WTC11 (cell line): ENCODE measurements at regions of chr19 and their contacts with region 1.

Region 1: GRCh38 chr19:3035542-3036118 is 6.5 kb upstream of the TLE2 start:
- DNase-seq: peak; percentile 98
- ATAC-seq: peak; percentile 87
- H3K4me3 Mint-ChIP-seq: peak overlapping the region; percentile 86
- H3K27ac Mint-ChIP-seq: peak overlapping the region; percentile 93
- H3K4me1 Mint-ChIP-seq: peaks cover 27% of the 10 kb centered on the region
- H3K27me3 Mint-ChIP-seq: peaks cover 66% of the 10 kb centered on the region
- CTCF ChIP-seq: no peak

Region 2: DNA sequence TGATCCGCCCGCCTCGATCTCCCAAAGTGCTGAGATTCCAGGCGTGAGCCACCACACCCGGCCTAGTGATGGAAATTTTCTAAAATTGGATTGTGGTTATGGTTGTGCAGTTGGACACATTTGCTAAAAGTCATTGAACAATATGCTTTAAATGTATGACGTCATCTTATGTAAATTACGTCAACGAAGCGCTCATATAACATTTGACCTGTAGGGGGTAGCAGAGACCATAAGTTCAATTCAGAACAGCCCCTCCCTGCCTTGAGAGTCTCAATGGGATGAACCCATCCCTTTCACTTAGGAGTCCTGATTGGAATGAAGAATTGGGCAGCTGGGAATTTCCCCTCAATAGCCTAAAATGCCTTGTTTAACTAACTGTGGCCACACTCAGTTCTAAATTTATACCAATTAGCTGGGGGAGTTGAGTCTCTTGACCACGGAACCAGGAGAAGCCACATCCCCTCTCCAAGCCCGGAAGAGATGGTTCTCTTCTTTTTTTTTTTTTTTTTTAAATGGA is 73.5 kb before region 1 on chr19:
- CTCF ChIA-PET with region 1: interaction called, 17 read pairs
- POLR2A ChIA-PET with region 1: interaction called, 4 read pairs
- DNase-seq: peak; percentile 52
- ATAC-seq: peak; percentile 84
- H3K4me3 Mint-ChIP-seq: no peak overlapping the region
- H3K27ac Mint-ChIP-seq: peak overlapping the region; percentile 92
- H3K4me1 Mint-ChIP-seq: peaks cover 2% of the 10 kb centered on the region; the same call in 1 of the 2 replicates
- H3K27me3 Mint-ChIP-seq: no peaks in the 10 kb centered on the region; the same call in 1 of the 2 replicates
- CTCF ChIP-seq: peak; percentile 83

Region 3: GRCh38 chr19:2977001-2977685 is 58.5 kb before region 1 on chr19 and contains the start of gene TLE6:
- CTCF ChIA-PET with region 1: interaction called, 25 read pairs
- POLR2A ChIA-PET with region 1: interaction called, 8 read pairs
- DNase-seq: peak; percentile 99
- ATAC-seq: peak; percentile 86
- H3K4me3 Mint-ChIP-seq: peak within 1 kb of the TSS; percentile 71
- H3K27ac Mint-ChIP-seq: no peak within 1 kb of the TSS
- H3K4me1 Mint-ChIP-seq: peaks cover 27% of the 10 kb centered on the region
- H3K27me3 Mint-ChIP-seq: peaks cover 58% of the 10 kb centered on the region
- CTCF ChIP-seq: no peak
- total RNA-seq, gene TLE6: 2.5 to 3.3 TPM (median 3.1 TPM) in 3 replicates

Region 4: GRCh38 chr19:3047425-3048189 is 12.0 kb after region 1 on chr19:
- CTCF ChIA-PET with region 1: interaction called, 32 read pairs
- POLR2A ChIA-PET with region 1: interaction called, 17 read pairs
- DNase-seq: peak; percentile 82
- ATAC-seq: peak; percentile 75
- H3K4me3 Mint-ChIP-seq: peak overlapping the region; percentile 82
- H3K27ac Mint-ChIP-seq: peak overlapping the region; percentile 93
- H3K4me1 Mint-ChIP-seq: peaks cover 26% of the 10 kb centered on the region
- H3K27me3 Mint-ChIP-seq: peaks cover 35% of the 10 kb centered on the region
- CTCF ChIP-seq: no peak

Region 5: DNA sequence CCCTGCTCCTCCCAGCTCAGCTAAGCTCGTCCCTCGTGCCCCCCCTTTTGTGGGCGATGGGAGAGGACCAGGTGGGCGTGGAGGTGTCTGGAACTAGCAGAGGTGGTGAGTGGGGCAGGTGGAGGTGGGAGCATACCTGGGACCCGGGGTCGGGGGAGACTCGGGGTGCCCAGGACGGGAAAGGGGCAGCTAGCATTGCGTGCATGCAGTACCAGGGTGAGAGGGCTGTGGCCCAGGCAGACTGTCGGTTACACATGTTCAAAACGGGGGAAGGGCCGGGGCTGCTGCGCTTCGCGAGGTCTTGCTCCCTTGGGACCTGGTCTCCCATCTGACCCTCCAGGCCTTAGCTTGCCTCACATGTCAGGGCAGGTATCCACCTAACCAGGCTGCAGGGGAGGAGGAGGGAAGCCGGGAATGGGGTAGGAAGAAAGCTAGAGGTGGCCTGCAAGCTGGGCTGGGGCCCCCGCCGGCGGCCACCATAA is 17.6 kb after region 1 on chr19:
- CTCF ChIA-PET with region 1: interaction called, 10 read pairs
- POLR2A ChIA-PET with region 1: interaction called, 4 read pairs
- DNase-seq: no peak
- ATAC-seq: no peak
- H3K4me3 Mint-ChIP-seq: no peak overlapping the region
- H3K27ac Mint-ChIP-seq: no peak overlapping the region
- H3K4me1 Mint-ChIP-seq: peaks cover 39% of the 10 kb centered on the region
- H3K27me3 Mint-ChIP-seq: peaks cover 4% of the 10 kb centered on the region
- CTCF ChIP-seq: no peak

Region 6: DNA sequence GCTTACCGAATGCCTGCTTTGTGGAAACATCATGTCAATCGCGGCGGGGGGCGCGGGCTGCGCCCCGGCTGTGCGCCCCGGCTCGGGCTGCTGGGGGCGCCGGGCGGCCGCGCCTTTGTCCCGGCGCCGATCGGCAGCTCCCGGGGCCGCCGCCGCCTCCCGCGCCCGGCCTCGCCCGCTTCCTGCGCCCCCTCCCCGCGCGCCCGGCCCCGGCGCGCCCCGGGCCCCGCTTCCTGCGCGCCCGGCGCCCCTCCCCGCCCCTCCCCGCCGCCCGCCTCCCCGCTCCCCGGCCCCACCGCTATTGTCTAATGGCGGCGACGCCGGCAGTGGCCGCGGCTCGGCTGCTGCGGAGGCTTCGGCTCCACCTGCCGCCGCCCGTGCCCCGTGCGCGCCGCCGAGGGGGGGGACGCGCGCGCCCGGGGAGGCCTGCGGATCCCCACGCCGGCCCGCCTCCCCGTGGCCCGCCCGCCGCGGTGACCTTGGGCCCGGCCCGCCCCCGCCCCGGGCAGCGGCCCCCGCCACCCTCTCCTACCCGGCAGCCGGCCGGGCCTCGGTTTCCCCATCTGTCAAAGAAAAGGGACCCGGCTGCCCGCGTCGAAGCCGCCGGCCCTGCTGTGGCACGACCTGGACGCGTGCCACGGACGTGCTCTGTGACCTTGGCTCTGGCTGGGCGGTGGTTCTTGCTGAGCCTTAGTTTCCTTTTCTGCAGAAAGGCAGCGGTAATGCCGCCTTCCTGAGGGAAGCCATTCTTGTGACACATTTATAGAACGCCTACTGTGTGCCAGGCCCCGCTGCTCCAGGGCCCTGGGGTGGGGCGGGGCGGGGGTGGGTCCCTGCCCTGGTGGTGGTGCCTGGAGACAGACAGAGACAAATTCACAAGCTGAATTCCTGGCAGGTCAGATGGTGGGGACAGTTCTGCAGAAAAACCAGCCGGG is 26.8 kb after region 1 on chr19 and contains the start of gene TLE5:
- CTCF ChIA-PET with region 1: interaction called, 10 read pairs
- POLR2A ChIA-PET with region 1: interaction called, 7 read pairs
- DNase-seq: no peak
- ATAC-seq: peak; percentile 38
- H3K4me3 Mint-ChIP-seq: peak within 1 kb of the TSS; percentile 68
- H3K27ac Mint-ChIP-seq: no peak within 1 kb of the TSS
- H3K4me1 Mint-ChIP-seq: peaks cover 25% of the 10 kb centered on the region
- H3K27me3 Mint-ChIP-seq: no peaks in the 10 kb centered on the region
- CTCF ChIP-seq: no peak
- total RNA-seq, gene TLE5: 233 to 249 TPM (median 246 TPM) in 3 replicates

Region 7: DNA sequence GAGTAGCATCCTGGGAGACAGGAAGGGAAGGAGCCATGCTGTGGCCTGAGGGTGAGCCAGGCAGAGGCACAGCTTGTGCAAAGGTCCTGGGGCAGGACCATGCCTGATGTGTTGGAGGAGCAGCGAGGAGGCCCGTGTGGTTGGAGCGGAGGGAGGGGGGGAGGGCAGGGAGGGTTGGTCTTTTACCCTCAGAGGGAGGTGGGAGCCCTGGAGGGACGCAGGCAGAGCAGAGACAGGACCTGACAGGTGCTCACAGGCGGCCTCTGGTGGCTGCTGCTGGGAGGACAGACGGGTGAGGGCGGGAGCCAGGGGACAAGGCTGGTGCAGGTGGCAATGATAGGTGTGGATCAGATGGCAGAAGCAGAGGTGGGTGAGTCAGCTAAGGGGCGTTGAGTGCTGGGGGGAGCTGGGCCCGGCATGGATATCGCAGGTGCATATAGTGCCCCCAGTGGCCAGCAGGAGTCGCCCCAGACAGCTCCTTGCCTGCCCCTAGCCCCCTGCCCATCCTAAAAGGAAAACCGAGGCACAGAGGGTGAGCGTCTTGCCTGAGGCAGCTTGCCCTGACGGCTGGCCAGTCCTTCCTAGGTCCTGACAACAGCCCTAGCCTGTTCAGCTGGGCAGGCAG is 90.4 kb after region 1 on chr19:
- CTCF ChIA-PET with region 1: interaction called, 21 read pairs
- POLR2A ChIA-PET with region 1: no interaction called
- DNase-seq: peak; percentile 85
- ATAC-seq: peak; percentile 98
- H3K4me3 Mint-ChIP-seq: no peak overlapping the region
- H3K27ac Mint-ChIP-seq: no peak overlapping the region
- H3K4me1 Mint-ChIP-seq: no peaks in the 10 kb centered on the region
- H3K27me3 Mint-ChIP-seq: no peaks in the 10 kb centered on the region
- CTCF ChIP-seq: peak; percentile 80

Region 8: DNA sequence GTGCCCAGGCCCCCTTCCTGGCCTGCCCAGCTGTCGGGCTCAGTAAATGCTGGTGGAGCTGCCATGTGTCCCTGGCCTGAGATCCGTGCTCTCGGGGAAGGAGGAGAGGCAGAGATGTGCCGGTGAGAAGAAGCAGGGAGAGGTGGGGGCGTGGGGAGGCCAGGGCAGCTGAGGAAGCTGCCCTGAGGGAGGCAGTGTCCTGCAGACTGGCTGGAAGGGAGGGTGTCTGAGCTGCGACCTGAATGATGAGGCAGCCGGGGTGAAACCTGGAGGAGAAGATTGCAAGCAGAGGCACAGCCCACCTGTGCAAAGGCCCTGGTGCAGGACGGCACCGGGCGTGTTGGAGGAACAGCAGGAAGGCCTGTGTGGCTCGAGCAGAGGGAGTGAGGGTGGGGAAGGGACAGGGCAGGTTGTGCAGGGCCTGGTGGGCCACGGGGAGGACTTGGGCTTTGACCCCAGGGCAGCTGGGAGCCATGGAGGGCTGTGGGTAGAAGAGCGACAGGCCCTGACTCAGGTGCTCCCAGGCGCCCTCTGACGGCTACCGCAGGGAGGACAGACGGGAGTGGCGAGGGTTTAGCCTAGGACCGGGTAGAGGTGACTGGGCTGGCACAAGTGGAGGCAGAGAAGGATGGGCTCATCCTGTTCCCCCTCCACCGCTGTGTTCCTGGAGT is 174.9 kb after region 1 on chr19:
- CTCF ChIA-PET with region 1: no interaction called
- POLR2A ChIA-PET with region 1: no interaction called
- DNase-seq: peak; percentile 81
- ATAC-seq: peak; percentile 91
- H3K4me3 Mint-ChIP-seq: no peak overlapping the region
- H3K27ac Mint-ChIP-seq: no peak overlapping the region; the same call in 1 of the 2 replicates
- H3K4me1 Mint-ChIP-seq: peaks cover 3% of the 10 kb centered on the region; the same call in 1 of the 2 replicates
- H3K27me3 Mint-ChIP-seq: no peaks in the 10 kb centered on the region
- CTCF ChIP-seq: peak; percentile 25; the same call in 1 of the 2 replicates